Panc1 (cell line): ENCODE measurements at regions of chr16 and their contacts with region 1.

Region 1: DNA sequence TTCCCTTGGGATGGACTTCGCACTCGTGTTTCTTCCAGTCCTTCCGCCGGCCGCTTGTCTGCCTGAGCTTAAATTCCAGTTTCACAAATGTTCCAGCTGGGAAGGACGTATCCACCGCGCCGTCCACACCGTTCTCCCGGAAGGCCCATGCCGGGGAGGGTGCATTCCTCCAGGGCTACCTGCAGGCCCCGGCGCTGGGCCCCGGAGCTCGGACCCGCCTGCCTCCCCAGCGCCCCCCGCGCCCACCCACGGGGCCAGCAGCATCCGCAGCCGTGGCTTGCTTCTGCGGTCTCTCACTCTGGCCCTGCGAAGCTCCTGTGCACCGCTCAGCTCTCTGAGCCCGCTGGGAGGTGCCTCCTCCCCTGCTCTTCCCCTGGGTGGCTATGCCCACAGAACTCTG is 2084.1 kb downstream of the TP53TG3F start:
- DNase-seq: no peak
- ATAC-seq: no peak
- H3K4me3 ChIP-seq: no peak overlapping the region
- H3K27ac ChIP-seq: no peak overlapping the region
- H3K4me1 ChIP-seq: no peaks in the 10 kb centered on the region
- H3K27me3 ChIP-seq: no peaks in the 10 kb centered on the region
- CTCF ChIP-seq: no peak

Region 2: GRCh38 chr16:35485915-35486314 is 57.6 kb before region 1 on chr16:
- CTCF ChIA-PET with region 1: no interaction called
- POLR2A ChIA-PET with region 1: no interaction called
- in situ Hi-C with region 1: no loop called
- intact Hi-C with region 1: loop called (anchors 10 kb)
- DNase-seq: no peak
- ATAC-seq: no peak
- H3K4me3 ChIP-seq: no peak overlapping the region
- H3K27ac ChIP-seq: no peak overlapping the region
- H3K4me1 ChIP-seq: no peaks in the 10 kb centered on the region
- H3K27me3 ChIP-seq: no peaks in the 10 kb centered on the region
- CTCF ChIP-seq: no peak

Region 3: GRCh38 chr16:35562471-35562870 is 19.0 kb after region 1 on chr16:
- CTCF ChIA-PET with region 1: no interaction called
- POLR2A ChIA-PET with region 1: no interaction called
- in situ Hi-C with region 1: no loop called
- intact Hi-C with region 1: no loop called
- DNase-seq: no peak
- ATAC-seq: no peak
- H3K4me3 ChIP-seq: no peak overlapping the region
- H3K27ac ChIP-seq: no peak overlapping the region
- H3K4me1 ChIP-seq: no peaks in the 10 kb centered on the region
- H3K27me3 ChIP-seq: no peaks in the 10 kb centered on the region
- CTCF ChIP-seq: no peak